Sigmoid colon (tissue), 7 donors: ENCODE measurements at regions of chr1 and their contacts with region 1.

Region 1: GRCh38 chr1:180178511-180179161 is 24.0 kb downstream of the QSOX1 start:
- DNase-seq: peak; percentile 81
- H3K4me3 ChIP-seq: no peak overlapping the region
- H3K27ac ChIP-seq: no peak overlapping the region
- H3K4me1 ChIP-seq: peaks cover 0 to 11% (median 10%) of the 10 kb centered on the region in 4 donors
- H3K27me3 ChIP-seq: no peaks in the 10 kb centered on the region
- CTCF ChIP-seq: peak; percentile 84 to 94 (median 91)
- EP300 ChIP-seq: no peak
- POLR2A ChIP-seq: no peak

Region 2: GRCh38 chr1:179867807-179868330 is 310.8 kb before region 1 on chr1:
- intact Hi-C with region 1: loop called (anchors 5 kb)
- DNase-seq: no peak
- H3K4me3 ChIP-seq: no peak overlapping the region
- H3K27ac ChIP-seq: no peak overlapping the region
- H3K4me1 ChIP-seq: peaks cover 0 to 27% (median 15%) of the 10 kb centered on the region in 4 donors
- H3K27me3 ChIP-seq: no peaks in the 10 kb centered on the region
- CTCF ChIP-seq: peak; percentile 13 to 60 (median 58)
- EP300 ChIP-seq: no peak
- POLR2A ChIP-seq: no peak

Region 3: DNA sequence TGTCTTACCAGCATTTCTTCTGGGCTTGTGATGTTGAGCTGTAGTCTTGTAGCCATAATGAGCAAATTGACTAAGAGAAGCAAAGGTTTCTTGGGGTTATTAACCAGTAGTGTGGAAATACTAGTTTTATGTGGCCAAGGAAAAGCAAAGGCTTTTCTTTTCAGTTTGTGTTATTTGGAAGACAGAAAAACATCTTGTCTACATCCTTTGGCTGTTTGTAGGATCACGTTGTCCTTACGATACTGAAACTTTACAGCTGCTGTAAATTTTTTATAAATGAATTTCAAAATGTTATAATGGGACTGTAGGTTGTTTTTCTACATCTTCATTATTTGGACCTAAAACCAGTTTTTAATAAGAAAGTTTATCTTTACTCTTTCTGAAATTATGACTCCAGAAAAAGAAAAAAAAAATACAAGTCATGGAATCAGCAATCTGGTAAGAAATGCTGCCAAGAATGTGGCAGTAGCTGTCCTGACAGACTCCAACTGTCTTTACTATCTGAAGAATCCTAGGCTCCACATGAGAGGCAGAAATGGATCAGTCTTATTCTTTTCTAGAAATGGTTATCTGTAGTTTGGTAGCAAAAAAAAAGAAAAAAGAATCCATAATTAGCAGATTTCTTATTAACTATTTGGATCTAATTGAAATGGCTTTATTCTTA is 65.5 kb before region 1 on chr1:
- intact Hi-C with region 1: loop called (anchors 5 kb)
- DNase-seq: no peak
- H3K4me3 ChIP-seq: no peak overlapping the region
- H3K27ac ChIP-seq: peak overlapping the region; percentile 56 to 64 (median 59)
- H3K4me1 ChIP-seq: peaks cover 0 to 41% (median 32%) of the 10 kb centered on the region in 4 donors
- H3K27me3 ChIP-seq: no peaks in the 10 kb centered on the region
- CTCF ChIP-seq: no peak
- EP300 ChIP-seq: no peak
- POLR2A ChIP-seq: no peak